Mammary epithelial cell (primary cell): ENCODE measurements at regions of chr16 and their contacts with region 1.

Region 1: DNA sequence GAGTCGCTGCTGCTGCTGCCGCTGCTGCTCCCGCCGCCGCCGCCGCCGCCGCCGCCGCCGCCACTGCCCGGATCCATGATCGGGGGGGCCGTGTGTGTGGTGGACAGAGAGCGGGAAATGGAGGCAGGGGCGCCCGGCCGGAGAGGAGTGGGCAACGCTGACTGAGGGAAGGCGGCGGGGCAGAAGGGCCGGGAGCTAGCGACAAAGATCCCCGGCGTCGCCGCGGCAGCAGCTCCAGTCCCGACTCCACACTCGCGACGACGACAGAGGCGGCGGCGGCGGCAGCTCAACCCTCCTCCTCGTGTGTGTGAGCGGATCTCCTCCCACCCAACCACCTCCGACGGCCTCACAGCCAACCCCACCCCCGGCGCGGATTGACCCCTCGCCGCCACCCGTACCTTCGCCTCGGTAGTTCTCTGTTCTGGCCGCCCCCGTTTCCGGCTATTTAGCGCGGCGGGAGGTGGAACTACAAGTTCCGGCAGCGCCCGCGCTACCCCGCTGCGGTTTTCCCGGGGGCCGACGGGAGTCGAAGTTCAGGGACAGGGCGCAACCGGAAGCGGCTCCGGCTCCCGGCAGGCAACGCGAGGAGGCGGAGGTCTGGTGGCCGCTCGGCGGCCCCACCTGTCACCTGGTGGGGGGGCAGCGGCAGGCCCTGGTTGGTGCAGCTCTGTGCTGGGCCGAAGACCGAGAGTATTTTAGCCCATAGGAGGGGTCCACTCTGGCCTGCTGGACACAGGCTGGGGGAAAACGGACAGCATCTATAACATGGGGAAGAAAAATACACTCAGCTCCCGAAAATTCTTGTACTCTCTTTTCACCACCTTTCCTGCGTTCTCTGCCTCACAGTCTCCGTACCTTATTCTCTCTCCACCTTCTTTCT is at the start of gene GSPT1:
- DNase-seq: peak; percentile 98
- H3K4me3 ChIP-seq: peak within 1 kb of the TSS; percentile 82 to 91 (median 86)
- H3K27ac ChIP-seq: peak within 1 kb of the TSS; percentile 78
- H3K4me1 ChIP-seq: peaks cover 22% of the 10 kb centered on the region
- H3K27me3 ChIP-seq: no peaks in the 10 kb centered on the region
- CTCF ChIP-seq: no peak
- total RNA-seq, gene GSPT1: 95.7 to 182 TPM

Region 2: DNA sequence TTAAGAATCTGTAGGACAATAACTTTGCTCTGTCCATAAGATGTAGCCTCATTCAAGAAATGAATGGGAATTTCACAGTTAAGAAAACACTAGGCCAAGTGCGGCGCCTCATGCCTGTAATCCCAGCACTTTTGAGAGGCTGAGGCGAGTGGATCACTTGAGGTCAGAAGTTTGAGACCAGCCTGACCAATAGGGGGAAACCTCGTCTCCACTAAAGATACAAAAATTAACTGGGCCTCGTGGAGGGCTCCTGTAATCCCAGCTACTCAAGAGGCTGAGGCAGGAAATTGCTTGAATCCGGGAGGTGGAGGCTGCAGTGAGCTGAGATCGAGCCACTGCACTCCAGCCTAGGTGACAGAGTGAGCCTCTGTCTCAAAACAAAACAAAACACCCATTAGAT is 44.7 kb before region 1 on chr16:
- CTCF ChIA-PET with region 1: no interaction called
- dilution Hi-C with region 1: loop called (anchors 5 kb)
- in situ Hi-C with region 1: no loop called
- intact Hi-C with region 1: no loop called
- DNase-seq: no peak
- H3K4me3 ChIP-seq: no peak overlapping the region
- H3K27ac ChIP-seq: no peak overlapping the region
- H3K4me1 ChIP-seq: peaks cover 14% of the 10 kb centered on the region
- H3K27me3 ChIP-seq: no peaks in the 10 kb centered on the region
- CTCF ChIP-seq: no peak

Region 3: GRCh38 chr16:11964761-11965551 is 49.1 kb after region 1 on chr16 and contains the start of gene TNFRSF17:
- CTCF ChIA-PET with region 1: no interaction called
- dilution Hi-C with region 1: no loop called
- in situ Hi-C with region 1: no loop called
- intact Hi-C with region 1: no loop called
- DNase-seq: no peak
- H3K4me3 ChIP-seq: no peak within 1 kb of the TSS
- H3K27ac ChIP-seq: no peak within 1 kb of the TSS
- H3K4me1 ChIP-seq: no peaks in the 10 kb centered on the region
- H3K27me3 ChIP-seq: no peaks in the 10 kb centered on the region
- CTCF ChIP-seq: no peak
- total RNA-seq, gene TNFRSF17: not detected

Region 4: DNA sequence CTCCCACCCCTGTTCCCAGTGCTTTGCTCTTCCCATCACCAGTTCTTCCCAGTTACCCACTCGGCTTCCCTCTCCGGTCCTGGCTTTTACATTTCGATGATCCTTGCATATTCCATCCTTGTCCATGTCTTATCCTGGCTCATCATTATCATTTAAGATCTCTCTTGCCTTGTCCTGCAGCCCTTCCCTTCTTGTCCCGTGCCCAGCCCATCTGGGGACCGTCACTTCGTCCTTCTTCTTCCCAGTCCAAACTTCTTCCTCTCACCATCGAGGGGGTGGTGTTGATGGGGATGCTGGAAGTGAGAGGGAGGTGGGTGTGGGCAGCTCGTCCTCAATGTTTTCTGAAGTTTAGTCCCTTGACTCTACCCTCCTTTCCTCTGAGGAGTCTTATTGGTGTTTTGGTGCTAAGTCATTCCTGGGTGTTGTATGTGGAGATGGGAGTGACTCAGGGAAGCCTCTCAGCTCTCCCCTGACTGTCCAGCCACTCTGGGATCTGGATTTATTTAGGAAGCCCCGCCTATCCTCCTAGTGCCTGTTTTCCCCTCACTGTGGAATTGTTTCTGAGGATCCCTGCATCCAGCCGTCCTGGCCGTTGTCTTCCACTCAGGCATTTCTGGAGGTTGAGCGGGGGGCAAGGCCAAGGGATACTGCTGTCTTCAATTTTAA is 61.6 kb after region 1 on chr16:
- CTCF ChIA-PET with region 1: no interaction called
- dilution Hi-C with region 1: no loop called
- in situ Hi-C with region 1: no loop called
- intact Hi-C with region 1: loop called (anchors 5 kb)
- DNase-seq: peak; percentile 69
- H3K4me3 ChIP-seq: peak overlapping the region; percentile 90 to 98 (median 91)
- H3K27ac ChIP-seq: peak overlapping the region; percentile 58
- H3K4me1 ChIP-seq: peaks cover 9% of the 10 kb centered on the region
- H3K27me3 ChIP-seq: no peaks in the 10 kb centered on the region
- CTCF ChIP-seq: no peak

Region 5: GRCh38 chr16:11994143-11995119 is 78.5 kb after region 1 on chr16:
- CTCF ChIA-PET with region 1: no interaction called
- dilution Hi-C with region 1: loop called (anchors 5 kb)
- in situ Hi-C with region 1: no loop called
- intact Hi-C with region 1: no loop called
- DNase-seq: peak; percentile 2
- H3K4me3 ChIP-seq: no peak overlapping the region
- H3K27ac ChIP-seq: no peak overlapping the region
- H3K4me1 ChIP-seq: no peaks in the 10 kb centered on the region
- H3K27me3 ChIP-seq: no peaks in the 10 kb centered on the region
- CTCF ChIP-seq: no peak

Region 6: GRCh38 chr16:12803203-12804097 is 887.6 kb after region 1 on chr16 and contains the start of gene CPPED1:
- CTCF ChIA-PET with region 1: no interaction called
- dilution Hi-C with region 1: no loop called
- in situ Hi-C with region 1: no loop called
- intact Hi-C with region 1: loop called (anchors 5 kb)
- DNase-seq: peak; percentile 94
- H3K4me3 ChIP-seq: peak within 1 kb of the TSS; percentile 46 to 82 (median 73)
- H3K27ac ChIP-seq: peak within 1 kb of the TSS; percentile 45
- H3K4me1 ChIP-seq: peaks cover 9% of the 10 kb centered on the region
- H3K27me3 ChIP-seq: no peaks in the 10 kb centered on the region
- CTCF ChIP-seq: no peak
- total RNA-seq, gene CPPED1: 12.8 to 19.9 TPM